Heart right ventricle (tissue), 16 donors: ENCODE measurements at regions of chr4 and their contacts with region 1.

Region 1: GRCh38 chr4:24551492-24552289 is 32.7 kb downstream of the DHX15 start:
- DNase-seq: no peak
- ATAC-seq: no peak
- H3K4me3 ChIP-seq: no peak overlapping the region
- H3K27ac ChIP-seq: peak overlapping the region in 1 of 10 donors; percentile 1
- H3K4me1 ChIP-seq: peaks cover 0 to 53% (median 33%) of the 10 kb centered on the region in 9 donors
- H3K27me3 ChIP-seq: no peaks in the 10 kb centered on the region
- CTCF ChIP-seq: peak in 7 of 9 donors; percentile 23 to 57 (median 47)

Region 2: GRCh38 chr4:24472514-24473308 is 79.0 kb before region 1 on chr4:
- intact Hi-C with region 1: loop called in 1 of 10 experiments (anchors 2 kb)
- DNase-seq: peak; percentile 80 to 83
- ATAC-seq: peak; percentile 84 to 94 (median 88)
- H3K4me3 ChIP-seq: peak overlapping the region; percentile 52 to 79 (median 68)
- H3K27ac ChIP-seq: peak overlapping the region in 9 of 10 donors; percentile 8 to 73 (median 58)
- H3K4me1 ChIP-seq: peaks cover 0 to 38% (median 22%) of the 10 kb centered on the region in 9 donors
- H3K27me3 ChIP-seq: peaks cover 0 to 70% (median 19%) of the 10 kb centered on the region in 7 donors
- CTCF ChIP-seq: peak; percentile 52 to 74 (median 65)

Region 3: DNA sequence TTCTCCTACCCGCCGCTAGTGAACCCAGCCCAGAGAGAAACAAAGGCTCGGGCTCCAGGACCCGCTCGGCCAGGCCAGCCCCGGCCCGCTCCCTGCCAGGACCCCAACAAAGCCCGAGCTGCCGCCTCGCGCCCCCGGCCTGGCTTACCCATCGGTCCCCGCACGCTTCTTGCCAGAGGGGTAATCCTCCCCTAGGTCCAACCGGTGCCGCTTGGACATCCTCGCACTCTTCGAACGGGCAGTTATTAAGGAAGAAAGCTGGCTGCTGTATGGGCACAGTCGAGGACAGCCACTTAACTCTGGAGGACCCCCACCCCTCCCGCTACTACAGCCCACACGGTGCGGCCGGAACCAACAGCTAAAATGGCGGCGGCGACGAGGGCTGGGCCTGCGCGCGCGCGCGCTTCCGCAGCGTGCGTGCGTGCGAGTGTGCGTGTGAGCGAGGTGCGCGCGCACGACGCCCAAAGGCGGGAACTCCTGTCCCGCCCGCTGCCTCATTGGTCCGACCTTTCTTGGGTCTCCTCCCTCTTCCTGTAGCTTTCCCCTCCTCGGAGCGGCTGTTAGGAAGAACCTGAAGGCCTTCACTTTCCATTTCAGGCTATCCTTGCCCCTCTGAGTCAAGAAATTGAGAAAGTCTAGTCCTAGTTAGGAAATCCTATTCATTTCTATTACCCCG is 32.6 kb after region 1 on chr4 and contains the start of gene DHX15:
- intact Hi-C with region 1: no loop called
- DNase-seq: peak; percentile 95
- ATAC-seq: peak; percentile 96 to 99 (median 98)
- H3K4me3 ChIP-seq: peak within 1 kb of the TSS; percentile 70 to 100 (median 94)
- H3K27ac ChIP-seq: peak within 1 kb of the TSS; percentile 92 to 99 (median 98)
- H3K4me1 ChIP-seq: peaks cover 0 to 53% (median 42%) of the 10 kb centered on the region in 9 donors
- H3K27me3 ChIP-seq: no peaks in the 10 kb centered on the region
- CTCF ChIP-seq: no peak
- total RNA-seq, gene DHX15: 42.5 to 69.6 (median 48.0) TPM